IMR-90 (cell line): ENCODE measurements at regions of chr7 and their contacts with region 1.

Region 1: GRCh38 chr7:1044191-1045068 is at the start of gene GPR146:
- DNase-seq: peak; percentile 94
- ATAC-seq: peak; percentile 98
- H3K4me3 ChIP-seq: peak within 1 kb of the TSS; percentile 54
- H3K27ac ChIP-seq: peak within 1 kb of the TSS; percentile 88
- H3K4me1 ChIP-seq: peaks cover 20% of the 10 kb centered on the region
- H3K27me3 ChIP-seq: no peaks in the 10 kb centered on the region
- CTCF ChIP-seq: peak; percentile 58
- POLR2A ChIP-seq: no peak
- RAD21 ChIP-seq: peak; percentile 43
- total RNA-seq, gene GPR146: 0.83 and 2.2 TPM in 2 replicates

Region 2: DNA sequence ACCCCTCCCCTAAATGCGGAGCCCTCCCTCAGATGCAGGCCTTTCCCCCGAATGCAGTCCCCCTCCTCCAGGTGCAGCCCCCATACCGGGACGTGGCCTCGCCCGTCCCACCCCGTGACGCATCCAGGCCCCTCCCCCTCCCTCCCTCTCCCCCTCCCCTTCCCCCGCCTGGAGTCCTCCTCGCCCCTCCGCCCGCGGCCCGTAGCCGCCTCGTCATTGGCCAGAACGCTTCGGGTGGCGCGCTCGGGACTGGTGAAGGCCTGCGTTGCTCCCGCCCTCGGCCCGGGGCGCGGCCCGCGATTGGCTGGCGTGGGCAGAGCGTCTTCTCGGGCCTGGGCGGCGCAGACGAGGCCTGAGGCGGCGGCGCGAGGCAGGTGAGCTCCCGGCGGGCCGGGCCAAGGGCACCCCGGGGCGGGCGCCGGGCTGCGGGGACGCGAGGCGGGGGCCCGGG is 228.1 kb before region 1 on chr7:
- CTCF ChIA-PET with region 1: no interaction called
- POLR2A ChIA-PET with region 1: no interaction called
- dilution Hi-C with region 1: no loop called
- in situ Hi-C with region 1: no loop called
- intact Hi-C with region 1: no loop called
- DNase-seq: peak; percentile 97
- ATAC-seq: peak; percentile 94
- H3K4me3 ChIP-seq: peak overlapping the region; percentile 89
- H3K27ac ChIP-seq: peak overlapping the region; percentile 57
- H3K4me1 ChIP-seq: peaks cover 20% of the 10 kb centered on the region
- H3K27me3 ChIP-seq: no peaks in the 10 kb centered on the region
- CTCF ChIP-seq: no peak
- POLR2A ChIP-seq: peak; percentile 79
- RAD21 ChIP-seq: no peak

Region 3: DNA sequence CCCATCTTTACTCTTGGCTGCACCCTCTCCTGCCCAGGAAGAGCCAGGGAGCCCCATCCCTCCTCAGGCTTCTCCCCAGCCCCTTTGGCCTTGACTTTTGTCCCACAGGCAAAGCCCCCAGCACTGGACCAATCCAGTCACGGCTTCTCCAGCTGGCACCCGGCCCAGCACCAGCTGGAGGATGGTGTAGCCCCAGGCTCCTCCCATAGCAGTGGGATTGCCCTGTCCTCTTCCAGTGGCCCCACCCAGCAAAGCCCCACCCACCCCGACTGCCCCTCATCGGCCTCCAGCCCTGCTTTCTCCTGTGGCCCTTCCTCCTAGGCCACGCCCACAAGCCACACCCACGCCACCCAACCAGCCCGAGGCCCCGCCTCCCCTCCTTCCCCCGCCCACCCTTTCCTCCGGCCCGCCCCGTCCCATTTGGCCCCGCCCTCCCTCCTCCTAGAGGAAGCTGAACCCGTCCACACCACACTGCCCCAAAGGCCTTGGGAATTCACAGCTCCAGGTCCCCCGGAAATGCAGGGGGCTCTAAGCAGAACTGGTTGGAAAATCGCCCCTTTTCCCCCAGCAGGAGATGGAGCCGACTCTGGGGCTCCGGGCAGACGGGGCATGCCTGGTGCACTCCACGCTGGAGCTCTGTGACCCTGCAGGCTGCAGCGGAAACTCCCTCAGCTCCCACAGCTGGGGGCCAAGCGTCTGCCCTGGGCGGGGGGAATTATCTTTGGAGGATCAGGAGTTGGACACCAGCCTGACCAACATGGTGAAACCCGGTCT is 142.9 kb before region 1 on chr7:
- CTCF ChIA-PET with region 1: no interaction called
- POLR2A ChIA-PET with region 1: no interaction called
- dilution Hi-C with region 1: no loop called
- in situ Hi-C with region 1: no loop called
- intact Hi-C with region 1: loop called (anchors 10 kb)
- DNase-seq: peak; percentile 82
- ATAC-seq: peak; percentile 95
- H3K4me3 ChIP-seq: no peak overlapping the region
- H3K27ac ChIP-seq: no peak overlapping the region
- H3K4me1 ChIP-seq: peaks cover 9% of the 10 kb centered on the region
- H3K27me3 ChIP-seq: no peaks in the 10 kb centered on the region
- CTCF ChIP-seq: no peak
- POLR2A ChIP-seq: no peak
- RAD21 ChIP-seq: no peak

Region 4: DNA sequence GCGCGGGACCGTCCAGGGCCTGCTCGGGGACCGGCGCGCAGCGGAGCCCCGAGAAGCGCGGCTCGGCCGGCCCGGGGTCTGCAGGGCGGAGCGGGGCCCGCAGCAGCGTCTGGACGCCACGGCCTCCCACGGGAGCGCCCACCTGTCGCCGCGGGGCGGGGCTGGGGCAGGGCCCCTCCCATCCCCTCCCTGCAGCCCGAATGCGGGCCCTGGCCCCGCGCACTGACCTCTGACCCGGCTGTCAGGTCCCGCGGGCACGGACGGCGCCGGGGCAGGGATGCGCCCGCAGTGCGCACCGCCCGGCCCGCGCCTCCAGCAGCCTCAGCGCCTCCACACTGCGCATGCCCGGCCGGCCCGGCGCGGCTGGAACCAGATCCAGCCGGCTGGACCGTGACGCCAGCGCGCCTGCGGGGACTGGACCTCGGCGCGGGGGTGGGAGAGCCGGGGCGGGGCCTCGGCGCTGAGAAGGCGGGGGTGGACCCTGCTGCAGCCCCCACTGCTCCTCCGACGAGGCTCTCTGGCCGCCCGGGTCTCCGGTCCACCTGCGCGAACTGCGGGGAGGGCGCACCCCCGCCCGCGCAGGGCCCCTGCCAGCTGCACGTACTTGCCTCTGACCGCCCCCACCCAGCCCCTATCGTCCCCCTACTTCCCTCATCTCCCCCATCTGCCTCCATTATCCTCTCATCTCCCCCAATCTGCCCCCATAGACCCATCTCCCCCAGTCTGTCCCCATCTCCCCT is 16.2 kb before region 1 on chr7:
- CTCF ChIA-PET with region 1: no interaction called
- POLR2A ChIA-PET with region 1: no interaction called
- dilution Hi-C with region 1: no loop called
- in situ Hi-C with region 1: no loop called
- intact Hi-C with region 1: no loop called
- DNase-seq: peak; percentile 86
- ATAC-seq: peak; percentile 93
- H3K4me3 ChIP-seq: peak overlapping the region; percentile 93
- H3K27ac ChIP-seq: peak overlapping the region; percentile 85
- H3K4me1 ChIP-seq: peaks cover 9% of the 10 kb centered on the region; the same call in 1 of the 2 replicates
- H3K27me3 ChIP-seq: no peaks in the 10 kb centered on the region
- CTCF ChIP-seq: no peak
- POLR2A ChIP-seq: peak; percentile 49; the same call in 1 of the 2 replicates
- RAD21 ChIP-seq: no peak

Region 5: DNA sequence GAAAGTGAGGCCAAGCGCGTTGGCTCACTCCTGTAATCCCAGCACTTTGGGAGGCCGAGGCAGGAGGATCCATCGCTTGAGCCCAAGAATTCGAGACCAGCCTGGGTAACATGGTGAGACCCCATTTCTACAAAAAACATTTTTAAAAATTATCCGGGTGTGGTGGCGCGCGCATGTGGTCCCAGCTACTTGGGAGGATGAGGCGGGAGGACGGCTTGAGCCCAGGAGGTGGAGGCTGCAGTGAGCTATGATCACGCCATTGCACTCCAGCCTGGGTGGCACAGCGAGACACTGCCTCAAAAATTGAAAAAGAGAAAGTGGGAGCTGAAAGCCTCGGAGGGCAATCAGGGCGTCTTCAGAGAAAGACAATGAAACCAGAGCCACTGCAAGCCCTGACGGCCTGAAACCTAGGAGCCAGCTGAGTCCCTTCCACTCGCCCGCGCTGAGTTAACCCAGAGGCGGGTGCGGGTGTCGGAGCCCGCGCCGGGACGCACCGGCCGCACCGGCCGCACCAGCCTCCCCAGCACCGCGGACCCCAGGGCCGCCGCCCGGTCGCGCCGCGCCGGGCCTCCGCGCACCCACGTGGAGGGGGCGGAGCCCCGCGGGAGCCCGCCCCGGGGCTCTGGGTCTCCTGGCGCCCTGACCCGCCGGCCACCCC is 93.2 kb after region 1 on chr7:
- CTCF ChIA-PET with region 1: no interaction called
- POLR2A ChIA-PET with region 1: no interaction called
- dilution Hi-C with region 1: no loop called
- in situ Hi-C with region 1: no loop called
- intact Hi-C with region 1: loop called (anchors 5 kb)
- DNase-seq: no peak
- ATAC-seq: peak; percentile 87
- H3K4me3 ChIP-seq: peak overlapping the region; percentile 75
- H3K27ac ChIP-seq: peak overlapping the region; percentile 35; the same call in 1 of the 2 replicates
- H3K4me1 ChIP-seq: peaks cover 8% of the 10 kb centered on the region
- H3K27me3 ChIP-seq: no peaks in the 10 kb centered on the region
- CTCF ChIP-seq: no peak
- POLR2A ChIP-seq: no peak
- RAD21 ChIP-seq: no peak